Caco-2 (cell line): ENCODE measurements at regions of chr5 and their contacts with region 1.

Region 1: GRCh38 chr5:96187309-96188027 is 225.8 kb upstream of the ELL2 start:
- DNase-seq: peak; percentile 65 to 73
- H3K4me3 ChIP-seq: no peak overlapping the region
- H3K4me3 Mint-ChIP-seq: peak overlapping the region; percentile 39
- H3K27ac Mint-ChIP-seq: peak overlapping the region; percentile 44
- H3K4me1 ChIP-seq: peaks cover 16% of the 10 kb centered on the region
- H3K4me1 Mint-ChIP-seq: peaks cover 44% of the 10 kb centered on the region
- H3K27me3 ChIP-seq: no peaks in the 10 kb centered on the region
- H3K27me3 Mint-ChIP-seq: no peaks in the 10 kb centered on the region
- CTCF ChIP-seq: no peak

Region 2: DNA sequence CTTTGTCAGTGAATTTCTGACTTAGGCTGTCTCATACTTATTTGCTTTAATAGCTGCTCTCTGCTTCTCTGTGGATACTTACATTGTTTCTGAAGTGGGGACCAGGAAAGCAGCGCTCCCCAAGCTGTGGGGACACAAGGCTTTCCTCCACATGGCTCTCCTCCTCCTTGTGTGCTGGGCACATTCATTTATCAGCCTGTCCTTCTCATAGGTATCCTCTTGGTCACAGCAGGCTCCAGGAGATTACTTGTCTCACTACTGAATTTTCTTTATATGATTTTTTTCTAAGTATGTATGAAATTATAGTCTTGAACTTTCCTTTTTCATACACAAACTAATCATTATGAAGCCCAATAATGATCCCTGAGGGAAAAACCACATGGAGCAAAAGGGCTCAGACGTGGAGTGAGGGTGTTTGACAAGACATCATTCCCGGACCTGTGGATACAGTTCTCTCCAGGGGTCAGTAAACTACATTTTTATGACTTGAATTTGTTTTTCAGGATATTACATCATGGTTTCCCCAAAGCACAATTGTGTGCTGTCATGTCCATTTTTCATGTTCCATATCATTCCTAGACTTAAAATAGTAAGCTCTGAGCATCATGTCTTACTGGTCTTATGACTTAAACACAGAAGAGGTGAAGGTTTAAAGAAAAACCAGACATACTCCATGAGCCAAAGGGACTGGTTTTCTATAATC is 11.0 kb after region 1 on chr5:
- CTCF ChIA-PET with region 1: no interaction called
- POLR2A ChIA-PET with region 1: interaction called, 3 read pairs
- intact Hi-C with region 1: loop called (anchors 1 kb)
- DNase-seq: no peak
- H3K4me3 ChIP-seq: no peak overlapping the region
- H3K4me3 Mint-ChIP-seq: no peak overlapping the region
- H3K27ac Mint-ChIP-seq: peak overlapping the region; percentile 69
- H3K4me1 ChIP-seq: peaks cover 43% of the 10 kb centered on the region
- H3K4me1 Mint-ChIP-seq: peaks cover 33% of the 10 kb centered on the region
- H3K27me3 ChIP-seq: no peaks in the 10 kb centered on the region
- H3K27me3 Mint-ChIP-seq: no peaks in the 10 kb centered on the region
- CTCF ChIP-seq: no peak

Region 3: DNA sequence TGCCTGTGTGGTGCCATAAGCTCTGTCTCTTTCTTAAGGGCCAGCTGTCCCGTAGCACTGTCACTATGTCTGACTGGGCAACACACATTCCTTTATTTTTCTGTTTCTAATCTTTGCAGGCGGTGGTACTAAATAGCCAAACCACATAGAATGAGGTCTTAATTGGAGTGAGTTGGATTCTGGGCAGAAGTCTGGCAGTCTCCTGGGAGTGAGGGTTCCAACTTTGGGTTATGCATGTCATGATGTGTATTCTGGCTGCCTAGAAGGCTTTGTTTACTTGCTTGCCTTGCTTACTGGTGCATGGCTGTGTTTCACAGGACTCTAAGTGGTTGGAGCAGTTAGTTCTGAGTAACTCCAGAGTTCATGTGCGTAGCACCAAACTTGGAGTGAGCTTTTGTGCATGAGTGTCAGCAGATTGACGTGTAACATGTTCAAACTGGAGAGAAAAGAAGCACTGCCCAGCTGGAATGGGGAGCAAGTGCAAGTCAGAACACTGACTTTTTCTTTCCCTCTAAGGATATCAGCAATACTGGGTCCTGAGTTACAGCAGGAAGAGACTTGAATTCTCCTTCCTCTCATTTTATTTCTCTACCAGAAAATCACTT is 59.7 kb after region 1 on chr5:
- CTCF ChIA-PET with region 1: no interaction called
- POLR2A ChIA-PET with region 1: no interaction called
- intact Hi-C with region 1: loop called (anchors 1 kb)
- DNase-seq: no peak
- H3K4me3 ChIP-seq: no peak overlapping the region
- H3K4me3 Mint-ChIP-seq: no peak overlapping the region
- H3K27ac Mint-ChIP-seq: no peak overlapping the region
- H3K4me1 ChIP-seq: peaks cover 25% of the 10 kb centered on the region
- H3K4me1 Mint-ChIP-seq: peaks cover 26% of the 10 kb centered on the region
- H3K27me3 ChIP-seq: no peaks in the 10 kb centered on the region
- H3K27me3 Mint-ChIP-seq: no peaks in the 10 kb centered on the region
- CTCF ChIP-seq: no peak

Region 4: DNA sequence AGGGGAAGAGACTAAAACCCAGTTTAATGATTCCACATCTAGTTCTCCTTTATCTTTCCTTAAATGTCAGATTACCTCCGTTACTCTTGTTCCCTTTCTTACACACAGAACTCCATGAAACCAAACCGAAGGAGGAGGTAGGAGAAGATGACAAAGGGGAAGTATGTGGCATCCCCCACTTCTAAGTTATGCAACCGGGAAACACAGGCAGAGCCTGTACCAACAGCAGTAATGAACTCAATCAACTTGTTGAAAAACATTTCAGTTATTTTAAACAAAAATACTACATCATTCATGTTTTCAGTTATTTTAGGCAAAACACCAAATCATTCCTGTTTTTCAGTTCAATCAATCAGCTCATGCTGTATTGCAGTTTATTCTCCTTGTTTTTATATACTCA is 143.7 kb after region 1 on chr5:
- CTCF ChIA-PET with region 1: no interaction called
- POLR2A ChIA-PET with region 1: no interaction called
- intact Hi-C with region 1: loop called (anchors 1 kb)
- DNase-seq: no peak
- H3K4me3 ChIP-seq: no peak overlapping the region
- H3K4me3 Mint-ChIP-seq: no peak overlapping the region
- H3K27ac Mint-ChIP-seq: no peak overlapping the region
- H3K4me1 ChIP-seq: peaks cover 35% of the 10 kb centered on the region
- H3K4me1 Mint-ChIP-seq: peaks cover 29% of the 10 kb centered on the region
- H3K27me3 ChIP-seq: no peaks in the 10 kb centered on the region
- H3K27me3 Mint-ChIP-seq: no peaks in the 10 kb centered on the region
- CTCF ChIP-seq: no peak

Region 5: GRCh38 chr5:96336351-96336985 is 149.0 kb after region 1 on chr5:
- CTCF ChIA-PET with region 1: interaction called, 6 read pairs
- POLR2A ChIA-PET with region 1: no interaction called
- intact Hi-C with region 1: loop called (anchors 1 kb)
- DNase-seq: peak; percentile 78 to 79
- H3K4me3 ChIP-seq: no peak overlapping the region
- H3K4me3 Mint-ChIP-seq: no peak overlapping the region
- H3K27ac Mint-ChIP-seq: no peak overlapping the region
- H3K4me1 ChIP-seq: peaks cover 40% of the 10 kb centered on the region
- H3K4me1 Mint-ChIP-seq: peaks cover 39% of the 10 kb centered on the region
- H3K27me3 ChIP-seq: no peaks in the 10 kb centered on the region
- H3K27me3 Mint-ChIP-seq: no peaks in the 10 kb centered on the region
- CTCF ChIP-seq: peak; percentile 84 to 93

Region 6: GRCh38 chr5:97839341-97840081 is 1652.0 kb after region 1 on chr5:
- CTCF ChIA-PET with region 1: no interaction called
- POLR2A ChIA-PET with region 1: no interaction called
- intact Hi-C with region 1: no loop called
- DNase-seq: no peak
- H3K4me3 ChIP-seq: no peak overlapping the region
- H3K4me3 Mint-ChIP-seq: no peak overlapping the region
- H3K27ac Mint-ChIP-seq: no peak overlapping the region
- H3K4me1 ChIP-seq: no peaks in the 10 kb centered on the region
- H3K4me1 Mint-ChIP-seq: no peaks in the 10 kb centered on the region
- H3K27me3 ChIP-seq: no peaks in the 10 kb centered on the region
- H3K27me3 Mint-ChIP-seq: no peaks in the 10 kb centered on the region
- CTCF ChIP-seq: no peak